Activated CD4-positive, alpha-beta T cell treated with anti-CD3 and anti-CD28 coated beads, Interleukin-2, amount 10 ng/mL, durations not matched to agents 24 days and 14 days (primary cell): ENCODE measurements at regions of chr10 and their contacts with region 1.

Region 1: DNA sequence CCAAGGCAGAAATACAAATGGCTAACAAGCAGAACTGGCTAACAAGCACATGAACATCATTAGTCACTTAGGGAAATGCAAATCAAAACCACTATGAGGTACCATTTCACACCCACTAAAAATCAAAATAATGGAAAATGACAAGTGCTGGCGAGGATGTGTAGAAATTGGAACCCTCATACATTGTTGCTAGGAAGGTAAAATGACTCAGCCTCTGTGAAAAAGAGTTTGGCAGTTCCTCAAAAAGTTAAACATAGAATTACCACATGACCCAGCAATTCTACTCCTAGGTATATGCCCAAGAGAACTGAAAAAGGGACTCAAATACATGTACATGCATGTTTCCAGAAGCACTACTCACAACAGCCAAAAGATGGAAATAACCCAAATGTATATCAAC is 52.8 kb upstream of the ANAPC16 start:
- DNase-seq: peak; percentile 59
- H3K4me3 Mint-ChIP-seq: peak overlapping the region; percentile 10
- H3K27ac Mint-ChIP-seq: peak overlapping the region; percentile 88
- H3K4me1 Mint-ChIP-seq: peaks cover 12% of the 10 kb centered on the region
- H3K27me3 Mint-ChIP-seq: no peaks in the 10 kb centered on the region

Region 2: DNA sequence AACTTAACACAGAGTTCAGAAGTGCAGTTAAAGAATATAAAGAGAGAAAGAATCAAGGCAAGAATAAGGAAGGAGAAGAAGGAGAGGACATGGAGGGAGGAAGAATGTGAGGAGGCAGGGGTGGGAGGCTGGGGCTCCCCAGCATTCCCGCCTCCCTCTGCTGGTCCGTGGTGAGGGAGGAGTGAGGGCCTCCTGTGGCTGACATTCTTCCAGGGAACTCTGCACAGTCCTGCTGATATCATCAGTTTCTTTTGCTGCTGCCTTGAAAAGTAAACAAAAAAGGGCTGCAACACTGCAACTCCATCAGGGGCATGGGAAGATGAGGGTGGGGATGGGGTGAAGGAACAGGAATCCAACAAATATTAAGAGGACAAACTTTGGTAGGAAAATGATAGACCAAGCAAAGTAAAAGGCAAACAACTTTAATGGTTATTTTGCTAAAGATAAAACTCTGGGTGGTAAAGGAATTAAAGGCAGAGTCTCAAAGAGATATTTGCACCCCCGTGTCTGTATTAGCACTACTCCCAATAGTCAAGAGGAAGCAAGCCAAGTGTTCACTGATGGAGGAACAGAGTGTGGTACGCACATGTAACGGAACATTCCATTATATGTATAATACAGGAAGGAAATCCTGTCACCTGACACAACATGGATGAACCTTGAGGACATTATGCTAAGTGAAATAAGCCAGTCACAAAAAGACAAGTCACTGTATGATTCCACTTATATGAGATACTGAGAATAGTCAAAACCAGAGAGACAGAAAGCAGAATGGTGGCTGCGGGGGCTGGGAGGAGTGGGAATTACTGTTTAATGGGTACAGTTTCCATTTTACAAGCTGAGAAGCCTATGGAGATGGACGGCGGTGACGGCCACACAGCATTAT is 66.6 kb before region 1 on chr10:
- intact Hi-C with region 1: loop called (anchors 1 kb)
- DNase-seq: no peak
- H3K4me3 Mint-ChIP-seq: peak overlapping the region; percentile 58
- H3K27ac Mint-ChIP-seq: peak overlapping the region; percentile 78
- H3K4me1 Mint-ChIP-seq: peaks cover 45% of the 10 kb centered on the region
- H3K27me3 Mint-ChIP-seq: no peaks in the 10 kb centered on the region

Region 3: DNA sequence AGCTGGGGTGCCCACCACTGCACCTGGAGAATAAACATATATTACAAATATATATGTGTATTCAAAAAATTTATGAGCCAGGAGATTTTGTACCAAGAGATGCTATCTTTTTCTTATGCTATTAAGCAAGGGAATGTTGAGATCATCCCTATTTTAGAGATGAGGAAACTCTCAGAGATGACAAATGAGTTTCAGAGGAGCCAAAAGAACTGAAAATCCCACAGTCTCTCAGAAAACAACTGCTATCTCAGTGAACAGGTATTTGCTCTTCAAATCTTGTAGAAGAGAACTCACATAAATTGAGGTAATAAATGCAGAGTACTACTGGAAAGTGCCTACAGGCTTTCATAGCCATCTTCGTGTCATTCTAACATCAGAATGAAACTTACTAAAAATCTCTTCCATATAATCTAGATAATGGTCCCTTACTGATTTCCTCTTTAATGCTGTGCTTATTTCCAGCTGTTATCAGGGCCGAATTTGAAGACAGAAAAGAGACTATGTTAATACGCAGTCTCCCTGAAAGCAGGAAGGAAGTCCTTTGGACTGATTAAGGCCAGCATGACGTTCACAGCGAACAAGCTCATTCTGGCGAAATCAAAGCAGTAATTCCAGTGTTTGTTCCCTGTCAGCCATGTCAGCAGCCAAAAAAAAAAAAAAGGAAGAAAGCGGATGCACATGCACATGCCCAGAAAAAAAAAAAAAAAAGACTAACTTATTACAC is 23.4 kb after region 1 on chr10:
- intact Hi-C with region 1: no loop called
- DNase-seq: no peak
- H3K4me3 Mint-ChIP-seq: no peak overlapping the region
- H3K27ac Mint-ChIP-seq: no peak overlapping the region
- H3K4me1 Mint-ChIP-seq: peaks cover 5% of the 10 kb centered on the region
- H3K27me3 Mint-ChIP-seq: no peaks in the 10 kb centered on the region

Region 4: DNA sequence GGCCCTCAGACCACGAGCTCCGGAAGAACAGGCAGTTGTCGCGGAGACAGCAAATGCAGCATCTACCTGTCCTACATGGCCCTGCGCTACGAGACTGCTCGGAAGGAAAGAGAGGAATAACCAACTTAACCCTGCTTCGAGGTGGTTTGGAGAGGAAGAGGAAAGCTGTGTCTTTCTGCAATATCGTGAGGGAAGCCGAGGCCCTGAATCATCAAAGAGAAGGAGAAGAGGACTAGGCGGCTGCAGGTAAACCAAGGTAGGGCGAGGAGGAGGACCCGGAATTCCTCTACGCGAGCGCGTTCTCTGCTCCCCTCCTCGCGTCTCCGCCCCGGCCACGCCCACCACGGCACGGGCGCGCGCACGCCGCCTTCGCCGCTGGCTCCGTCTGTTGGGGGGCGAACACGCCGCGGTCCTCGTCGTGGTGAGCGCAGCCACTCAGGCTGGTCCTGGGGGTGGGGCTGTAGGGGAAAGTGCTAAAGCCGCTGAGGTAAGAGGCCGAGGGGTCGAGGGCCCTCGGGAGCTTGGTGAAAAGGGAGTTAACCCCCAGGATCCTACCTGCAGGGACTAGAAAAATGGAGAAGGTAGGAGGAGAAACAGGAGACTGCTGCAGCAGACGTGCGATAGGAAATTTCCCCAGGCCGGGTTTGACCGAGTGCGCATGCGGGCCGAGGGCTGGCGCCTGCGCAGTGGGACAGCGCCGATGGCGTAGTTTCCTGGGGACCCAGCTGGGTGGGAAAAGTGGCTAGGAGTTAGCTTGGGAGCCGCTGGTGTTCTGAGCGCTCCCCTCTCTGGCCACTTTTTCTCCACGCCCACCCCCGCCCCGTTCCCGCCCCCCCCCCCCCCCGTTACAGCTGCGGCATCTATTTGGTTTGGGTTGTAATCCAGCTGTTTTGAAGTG is 52.9 kb after region 1 on chr10 and contains the starts of genes ANAPC16 and ASCC1:
- intact Hi-C with region 1: loop called (anchors 2 kb)
- DNase-seq: peak; percentile 99
- H3K4me3 Mint-ChIP-seq: peak within 1 kb of the TSS; percentile 96
- H3K27ac Mint-ChIP-seq: peak within 1 kb of the TSS; percentile 100
- H3K4me1 Mint-ChIP-seq: peaks cover 30% of the 10 kb centered on the region
- H3K27me3 Mint-ChIP-seq: peaks cover 1% of the 10 kb centered on the region
- total RNA-seq, gene ANAPC16: 73.2 and 74.3 TPM in 2 replicates
- total RNA-seq, gene ASCC1: 33.6 and 34.1 TPM in 2 replicates